AG04450 (cell line): ENCODE measurements at regions of chr10 and their contacts with region 1.

Region 1: DNA sequence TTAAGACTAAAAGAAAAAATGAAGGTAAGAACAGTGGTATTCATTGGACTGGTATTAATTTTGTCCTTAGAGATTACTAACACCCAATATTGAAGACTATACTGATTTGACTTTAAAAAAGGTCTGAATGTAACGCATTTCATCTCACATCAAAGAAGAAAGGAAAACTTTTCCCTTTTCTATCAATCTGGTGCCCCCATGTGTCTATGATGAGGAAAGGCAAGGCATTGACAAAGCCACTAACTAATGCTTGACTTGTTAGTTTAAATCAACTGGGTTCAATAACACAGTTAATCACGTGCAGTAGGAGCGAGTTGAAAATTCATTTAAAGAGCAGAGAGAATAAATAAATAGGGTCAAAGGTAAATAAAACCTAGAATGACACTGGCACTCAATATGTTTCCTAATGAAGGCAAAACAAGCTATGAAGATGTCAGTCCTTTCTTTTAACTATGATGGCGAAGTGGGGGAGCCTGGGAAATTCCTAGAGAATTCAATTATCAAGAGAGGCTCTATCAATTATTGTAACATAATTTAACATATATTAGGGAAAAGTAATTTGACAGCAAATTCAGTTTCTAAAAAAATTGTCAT is 180.9 kb downstream of the ANK3 start:
- DNase-seq: peak; percentile 8
- H3K4me3 ChIP-seq: no peak overlapping the region
- H3K27ac ChIP-seq: no peak overlapping the region
- H3K27me3 ChIP-seq: no peaks in the 10 kb centered on the region
- CTCF ChIP-seq: peak; percentile 92

Region 2: GRCh38 chr10:60114765-60115586 is 93.8 kb before region 1 on chr10:
- CTCF ChIA-PET with region 1: interaction called, 182 read pairs
- POLR2A ChIA-PET with region 1: no interaction called
- DNase-seq: peak; percentile 43
- H3K4me3 ChIP-seq: no peak overlapping the region
- H3K27ac ChIP-seq: no peak overlapping the region
- H3K27me3 ChIP-seq: no peaks in the 10 kb centered on the region
- CTCF ChIP-seq: peak; percentile 69

Region 3: DNA sequence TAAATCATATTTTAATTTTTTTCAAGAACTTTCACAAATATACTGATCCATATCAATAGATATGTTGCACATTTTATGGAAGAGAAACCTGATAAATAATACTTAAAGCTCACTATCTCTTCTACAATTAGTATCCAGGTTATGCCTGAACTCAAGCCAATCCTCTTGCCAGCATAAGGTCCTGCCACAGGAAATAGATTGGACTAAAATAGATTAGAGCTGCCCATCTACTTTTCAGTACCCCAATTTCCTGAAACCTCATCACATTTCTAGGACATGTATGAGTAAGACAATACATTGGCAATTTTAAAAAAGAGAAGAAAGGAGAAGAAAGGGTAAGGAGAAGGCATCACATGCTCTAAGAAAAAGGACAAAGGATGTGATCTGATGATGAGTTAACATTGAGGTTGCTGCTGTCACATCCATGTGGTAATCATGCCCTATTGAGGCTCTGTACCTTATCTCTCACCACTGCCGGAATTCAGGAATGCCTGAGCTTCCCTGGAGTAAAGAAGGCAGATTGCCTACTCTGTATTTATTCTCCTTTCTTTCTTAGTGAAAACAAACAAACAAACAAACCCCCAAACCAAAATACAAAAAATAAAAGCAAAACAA is 18.8 kb before region 1 on chr10:
- CTCF ChIA-PET with region 1: interaction called, 12 read pairs
- POLR2A ChIA-PET with region 1: no interaction called
- DNase-seq: no peak
- H3K4me3 ChIP-seq: no peak overlapping the region
- H3K27ac ChIP-seq: no peak overlapping the region
- H3K27me3 ChIP-seq: no peaks in the 10 kb centered on the region
- CTCF ChIP-seq: no peak

Region 4: GRCh38 chr10:60237977-60238758 is 29.4 kb after region 1 on chr10:
- CTCF ChIA-PET with region 1: interaction called, 15 read pairs
- POLR2A ChIA-PET with region 1: no interaction called
- DNase-seq: peak; percentile 30
- H3K4me3 ChIP-seq: peak overlapping the region; percentile 21
- H3K27ac ChIP-seq: no peak overlapping the region
- H3K27me3 ChIP-seq: no peaks in the 10 kb centered on the region
- CTCF ChIP-seq: peak; percentile 63